ENCODE measurements at regions of chr17 and their contacts with region 1.

Region 1: DNA sequence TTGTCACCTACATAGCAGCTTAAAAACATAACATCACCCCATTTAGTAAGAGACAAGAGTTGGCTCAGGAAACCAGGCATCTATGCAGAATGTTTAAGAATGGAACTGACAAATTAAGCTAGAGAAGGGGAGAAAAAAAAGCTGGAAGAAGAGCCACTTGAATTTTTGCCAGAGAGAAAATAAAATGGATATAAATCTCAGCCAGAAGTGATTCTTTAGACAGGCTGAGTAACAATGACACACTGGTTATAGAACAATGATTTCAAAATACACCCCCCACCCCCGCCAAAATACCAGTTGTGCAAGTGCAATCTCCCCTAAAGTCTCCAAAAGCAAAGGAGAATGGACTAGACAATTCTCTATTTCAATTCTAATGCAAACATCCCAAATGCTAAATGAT is 22.4 kb downstream of the LSM12 start:
- DNase-seq: no peak
- ATAC-seq: no peak
- H3K4me3 ChIP-seq: no peak overlapping the region
- H3K27ac ChIP-seq: no peak overlapping the region
- H3K4me1 ChIP-seq: peaks cover 0 to 1% of the 10 kb centered on the region in 2 donors
- H3K27me3 ChIP-seq: no peaks in the 10 kb centered on the region

Region 2: DNA sequence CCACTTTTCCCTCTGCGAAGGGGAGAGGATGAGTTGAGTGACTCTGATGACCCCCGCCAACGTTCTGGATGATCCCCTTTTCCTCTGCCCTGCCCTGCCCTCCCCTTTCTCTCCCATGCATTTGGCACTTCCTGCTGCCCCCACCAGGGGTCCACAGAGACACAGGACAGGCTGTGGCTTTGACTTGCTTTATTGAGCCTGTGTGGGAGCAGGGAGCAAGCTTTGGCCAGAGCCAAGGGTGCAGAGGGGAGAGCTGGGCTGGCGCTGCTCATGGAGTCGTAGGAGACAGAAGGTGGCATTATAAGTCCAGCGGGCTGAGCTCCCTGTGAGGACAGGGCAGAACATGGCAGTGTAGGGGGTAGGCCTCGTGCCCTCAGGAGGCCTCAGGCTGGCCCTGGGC is 103.4 kb before region 1 on chr17:
- intact Hi-C with region 1: loop called (anchors 2 kb)
- DNase-seq: no peak
- ATAC-seq: no peak
- H3K4me3 ChIP-seq: no peak overlapping the region
- H3K27ac ChIP-seq: no peak overlapping the region
- H3K4me1 ChIP-seq: no peaks in the 10 kb centered on the region
- H3K27me3 ChIP-seq: no peaks in the 10 kb centered on the region

Region 3: GRCh38 chr17:44006598-44007345 is 37.3 kb before region 1 on chr17:
- intact Hi-C with region 1: loop called in 1 of 2 experiments (anchors 5 kb)
- DNase-seq: peak; percentile 99 to 100
- ATAC-seq: peak; percentile 94
- H3K4me3 ChIP-seq: peak overlapping the region; percentile 55 to 58
- H3K27ac ChIP-seq: no peak overlapping the region
- H3K4me1 ChIP-seq: no peaks in the 10 kb centered on the region
- H3K27me3 ChIP-seq: peaks cover 0 to 2% of the 10 kb centered on the region in 2 donors

Region 4: DNA sequence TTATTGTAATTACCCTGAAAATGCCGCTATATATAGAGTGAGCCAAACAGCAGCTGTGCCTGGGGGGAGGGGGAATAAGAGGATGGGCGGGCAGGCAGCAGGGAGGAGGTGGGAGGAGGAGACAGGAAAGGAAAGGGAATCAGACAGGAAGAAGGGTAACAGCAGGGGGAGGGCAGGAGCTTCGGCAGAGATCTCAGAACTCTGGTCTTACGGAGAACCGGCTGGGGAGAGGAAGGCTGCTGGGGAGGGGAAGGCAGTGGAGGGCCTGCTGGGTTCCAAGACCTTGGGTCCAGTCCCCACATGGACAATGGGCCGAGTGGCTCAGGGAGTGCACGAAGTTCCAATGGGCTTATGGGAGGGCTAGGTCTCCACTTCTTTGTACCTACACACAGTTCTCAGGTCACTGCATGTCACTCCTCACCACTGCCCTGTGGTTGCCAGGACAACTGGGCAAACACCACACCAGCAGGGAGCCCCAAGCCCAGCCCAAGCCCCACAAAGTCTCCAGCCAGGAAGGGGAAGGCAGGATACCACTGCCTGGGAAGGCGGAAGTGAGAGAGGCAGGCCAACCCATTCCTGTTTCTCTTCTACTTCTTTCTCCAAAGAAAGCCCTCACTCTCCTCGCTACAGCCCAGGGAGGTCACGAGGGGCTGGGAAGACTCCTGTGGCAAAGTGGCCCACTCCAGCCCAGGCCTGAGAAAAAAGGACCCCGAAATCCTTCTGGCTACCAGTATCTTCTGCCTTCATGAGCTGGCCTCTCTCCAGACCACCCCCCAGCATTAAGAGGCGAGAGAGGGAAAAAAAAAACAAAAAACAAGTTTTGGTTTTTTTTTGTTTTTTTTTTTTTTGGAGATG is 51.8 kb after region 1 on chr17:
- intact Hi-C with region 1: no loop called
- DNase-seq: peak in 1 of 2 donors; percentile 78
- ATAC-seq: peak; percentile 76
- H3K4me3 ChIP-seq: no peak overlapping the region
- H3K27ac ChIP-seq: peak overlapping the region in 1 of 2 donors; percentile 34
- H3K4me1 ChIP-seq: peaks cover 0 to 3% of the 10 kb centered on the region in 2 donors
- H3K27me3 ChIP-seq: no peaks in the 10 kb centered on the region

Measured in aorta (tissue), 5 donors.